ENCODE measurements at regions of chr2 and their contacts with region 1.

Region 1: GRCh38 chr2:23757686-23758433 is 169.1 kb downstream of the ATAD2B start:
- DNase-seq: no peak
- ATAC-seq: no peak

Region 2: GRCh38 chr2:23384551-23385349 is 373.1 kb before region 1 on chr2 and contains the start of gene KLHL29:
- intact Hi-C with region 1: loop called (anchors 10 kb)
- DNase-seq: peak; percentile 91
- ATAC-seq: peak; percentile 74
- total RNA-seq, gene KLHL29: 0.54 TPM

Region 3: DNA sequence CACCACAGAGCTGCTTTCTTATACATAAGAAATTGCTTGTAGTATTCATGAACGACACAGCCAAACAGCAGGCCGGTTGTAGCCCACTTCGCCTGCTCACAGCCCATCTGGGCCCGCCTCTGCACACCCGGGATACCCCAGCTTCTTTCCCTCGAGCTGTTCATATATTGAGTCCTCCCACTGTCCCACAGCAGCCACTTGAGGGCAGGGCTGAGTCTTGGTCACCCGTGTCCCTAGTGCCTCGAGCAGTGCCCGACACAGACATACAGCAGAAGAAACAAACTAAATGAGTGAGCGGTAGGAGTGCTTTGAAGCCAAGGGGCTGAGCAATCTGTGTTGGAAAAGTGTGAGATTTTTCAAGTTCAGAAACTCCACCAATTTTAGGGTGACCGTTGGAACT is 121.4 kb before region 1 on chr2:
- intact Hi-C with region 1: loop called (anchors 5 kb)
- DNase-seq: peak; percentile 69
- ATAC-seq: peak; percentile 59

Measured in Right ventricle myocardium inferior (tissue), 1 donor.